Mammary epithelial cell (primary cell): ENCODE measurements at regions of chrX and their contacts with region 1.

Region 1: GRCh38 chrX:17535229-17535628 is 160.2 kb downstream of the NHS start:
- DNase-seq: peak; percentile 32
- H3K4me3 ChIP-seq: no peak overlapping the region
- H3K27ac ChIP-seq: no peak overlapping the region
- H3K4me1 ChIP-seq: no peaks in the 10 kb centered on the region
- H3K27me3 ChIP-seq: no peaks in the 10 kb centered on the region
- CTCF ChIP-seq: peak; percentile 69 to 76

Region 2: GRCh38 chrX:17160971-17161370 is 374.3 kb before region 1 on chrX:
- CTCF ChIA-PET with region 1: no interaction called
- dilution Hi-C with region 1: no loop called
- in situ Hi-C with region 1: no loop called
- intact Hi-C with region 1: loop called (anchors 10 kb)
- DNase-seq: no peak
- H3K4me3 ChIP-seq: no peak overlapping the region
- H3K27ac ChIP-seq: no peak overlapping the region
- H3K4me1 ChIP-seq: no peaks in the 10 kb centered on the region
- H3K27me3 ChIP-seq: no peaks in the 10 kb centered on the region
- CTCF ChIP-seq: peak; percentile 21 to 39

Region 3: DNA sequence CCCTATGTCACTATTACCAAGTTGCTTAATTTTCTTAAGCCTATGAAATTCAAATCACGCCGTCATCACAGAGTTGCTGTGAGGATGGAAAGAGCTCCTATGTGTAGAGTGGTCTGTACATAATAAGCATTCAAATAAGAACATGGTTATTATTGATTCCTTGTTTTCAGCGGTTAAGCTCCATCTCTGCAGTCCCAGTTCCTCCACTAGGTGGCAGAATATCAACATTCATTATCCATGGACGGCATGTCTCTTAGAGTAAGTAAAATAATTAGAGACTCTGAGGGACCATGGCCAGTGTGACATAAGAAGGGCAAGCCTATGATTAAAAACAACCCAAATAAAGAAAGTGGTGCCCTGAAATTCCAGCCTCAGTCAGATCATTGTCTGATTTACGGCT is 292.8 kb before region 1 on chrX:
- CTCF ChIA-PET with region 1: no interaction called
- dilution Hi-C with region 1: no loop called
- in situ Hi-C with region 1: no loop called
- intact Hi-C with region 1: loop called (anchors 1 kb)
- DNase-seq: peak; percentile 43
- H3K4me3 ChIP-seq: no peak overlapping the region
- H3K27ac ChIP-seq: no peak overlapping the region
- H3K4me1 ChIP-seq: no peaks in the 10 kb centered on the region
- H3K27me3 ChIP-seq: peaks cover 9% of the 10 kb centered on the region
- CTCF ChIP-seq: peak; percentile 81 to 90

Region 4: DNA sequence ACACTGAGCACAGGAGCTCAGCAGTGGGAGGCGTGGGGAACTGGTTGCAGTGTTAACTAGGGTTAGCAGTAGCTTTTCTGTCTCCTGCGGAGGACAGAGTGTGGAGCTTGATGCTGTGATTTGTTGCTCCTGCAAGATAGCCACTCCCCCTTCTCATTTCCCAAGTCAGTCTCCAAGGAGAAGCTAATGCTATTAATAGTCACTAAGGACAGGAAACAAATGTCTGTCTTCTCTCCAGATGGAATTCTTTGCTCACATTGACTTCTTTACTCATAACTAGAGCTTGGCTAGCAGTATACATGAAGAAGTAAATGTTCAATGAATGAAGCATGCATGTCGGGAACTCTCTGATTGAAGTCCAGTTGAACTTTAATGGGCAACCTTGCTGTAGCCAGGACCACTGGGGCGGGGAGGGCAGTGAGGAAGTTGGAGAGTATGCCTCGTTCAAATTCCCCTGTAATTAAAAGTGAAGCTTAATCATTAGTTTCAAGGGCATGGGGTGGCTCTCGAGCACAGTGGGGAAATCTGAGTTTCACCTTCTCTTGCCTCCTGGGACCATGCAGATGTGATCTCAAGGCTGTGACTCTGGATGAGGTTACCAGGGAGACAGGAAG is 45.4 kb after region 1 on chrX:
- CTCF ChIA-PET with region 1: no interaction called
- dilution Hi-C with region 1: loop called (anchors 10 kb)
- in situ Hi-C with region 1: no loop called
- intact Hi-C with region 1: no loop called
- DNase-seq: no peak
- H3K4me3 ChIP-seq: no peak overlapping the region
- H3K27ac ChIP-seq: no peak overlapping the region
- H3K4me1 ChIP-seq: no peaks in the 10 kb centered on the region
- H3K27me3 ChIP-seq: no peaks in the 10 kb centered on the region
- CTCF ChIP-seq: no peak